Motor neuron (in vitro differentiated cells): ENCODE measurements at regions of chr9 and their contacts with region 1.

Region 1: DNA sequence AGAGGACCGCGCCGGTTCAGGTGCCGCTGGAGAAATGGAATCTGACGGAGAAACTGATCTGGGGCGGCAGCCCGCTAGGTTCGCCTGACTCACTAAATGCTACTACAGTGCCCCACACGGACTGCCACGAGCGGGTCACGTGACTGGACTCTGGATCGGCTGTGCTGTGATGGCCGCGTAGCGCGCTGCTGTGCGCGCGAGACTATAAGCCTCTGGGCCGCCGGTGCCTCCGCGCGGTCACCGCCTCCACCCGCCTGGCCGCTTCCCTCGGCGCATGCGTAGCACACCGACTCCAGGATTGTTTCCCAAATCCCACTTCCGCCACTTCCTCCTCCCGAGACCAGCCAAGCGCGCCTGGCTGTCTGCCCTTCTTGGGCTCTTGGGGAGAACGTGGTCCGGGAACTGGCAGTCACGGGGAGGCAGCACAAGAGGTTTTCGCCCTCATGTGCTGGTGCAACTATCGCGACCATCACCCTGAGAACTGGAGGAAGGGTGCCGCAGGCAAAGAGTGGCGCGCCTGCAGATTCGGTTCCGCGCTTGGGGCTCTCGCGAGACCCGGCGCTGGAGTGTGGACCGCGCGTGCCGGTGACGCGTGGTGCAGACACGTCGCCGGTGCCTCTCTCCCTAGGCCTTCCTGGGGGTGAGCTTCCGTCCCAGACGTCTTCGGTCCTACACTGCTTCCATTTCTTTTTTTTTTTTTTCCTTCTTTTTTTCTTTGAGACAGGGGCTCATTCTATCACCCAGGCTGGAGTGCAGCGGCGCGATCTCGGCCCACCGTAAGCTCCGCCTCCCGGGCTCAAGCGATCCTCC is 35.8 kb upstream of the GLDC start:
- ATAC-seq: peak; percentile 89 to 94 (median 91)
- H3K4me3 ChIP-seq: peak overlapping the region; percentile 61 to 81 (median 79)
- H3K27ac ChIP-seq: peak overlapping the region; percentile 98
- H3K4me1 ChIP-seq: peaks cover 8 to 9% of the 10 kb centered on the region in 2 donors

Region 2: GRCh38 chr9:6584881-6585597 is 96.3 kb before region 1 on chr9:
- in situ Hi-C with region 1: loop called in 2 of 9 experiments (anchors 25 kb)
- ATAC-seq: peak in 3 of 8 experiments; percentile 58 to 68 (median 61)
- H3K4me3 ChIP-seq: no peak overlapping the region
- H3K27ac ChIP-seq: no peak overlapping the region
- H3K4me1 ChIP-seq: no peaks in the 10 kb centered on the region

Region 3: GRCh38 chr9:6788162-6789016 is 107.0 kb after region 1 on chr9:
- in situ Hi-C with region 1: loop called in 1 of 9 experiments (anchors 25 kb)
- ATAC-seq: peak; percentile 70 to 94 (median 80)
- H3K4me3 ChIP-seq: no peak overlapping the region
- H3K27ac ChIP-seq: no peak overlapping the region
- H3K4me1 ChIP-seq: peaks cover 6 to 14% of the 10 kb centered on the region in 2 donors